Activated naive CD4-positive, alpha-beta T cell treated with anti-CD3 and anti-CD28 coated beads for 36 hours (primary cell): ENCODE measurements at regions of chr1 and their contacts with region 1.

Region 1: DNA sequence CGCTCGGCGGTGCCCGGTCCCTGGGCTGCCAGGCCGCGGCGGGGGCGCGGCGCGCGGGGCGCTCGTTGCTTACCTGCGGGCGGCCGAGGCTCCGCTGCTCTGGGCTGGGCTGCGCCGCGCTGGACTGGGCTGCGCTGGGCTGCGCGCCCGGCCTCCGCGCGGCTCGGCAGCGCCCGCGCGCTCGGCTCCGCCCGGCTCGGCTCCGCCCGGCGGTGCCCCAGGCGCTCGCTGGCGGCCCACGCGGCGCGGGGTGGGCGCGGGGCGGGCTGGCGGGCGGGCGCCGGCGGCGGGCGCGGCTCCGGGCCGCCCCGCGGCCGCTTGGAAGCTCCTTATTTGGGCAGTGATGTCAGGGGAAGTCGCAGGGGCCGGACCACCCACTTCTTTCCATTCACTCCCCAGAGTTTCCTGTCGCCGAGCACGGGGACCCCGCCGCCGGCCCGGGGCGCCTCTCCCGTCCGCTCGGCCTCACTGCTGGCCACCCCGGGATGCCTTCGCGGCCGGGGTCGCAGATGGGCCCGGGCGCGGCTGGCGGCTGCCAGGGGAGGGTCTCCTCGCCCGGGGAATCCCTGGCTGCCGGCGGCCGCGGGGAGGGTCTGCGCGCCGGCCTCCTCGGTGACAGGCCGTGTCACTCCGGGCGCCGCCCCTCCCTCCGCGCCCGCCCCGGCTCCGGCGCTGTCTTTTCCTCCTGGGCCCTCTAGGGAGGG is 177.7 kb upstream of the EDN2 start:
- DNase-seq: peak; percentile 80
- H3K4me3 Mint-ChIP-seq: peak overlapping the region; percentile 67
- H3K27ac Mint-ChIP-seq: peak overlapping the region; percentile 67
- H3K4me1 Mint-ChIP-seq: peaks cover 77% of the 10 kb centered on the region
- H3K27me3 Mint-ChIP-seq: no peaks in the 10 kb centered on the region

Region 2: GRCh38 chr1:41573785-41574713 is 88.2 kb before region 1 on chr1:
- CTCF ChIA-PET with region 1: interaction called, 4 read pairs
- intact Hi-C with region 1: loop called (anchors 1 kb)
- DNase-seq: peak; percentile 92
- H3K4me3 Mint-ChIP-seq: no peak overlapping the region
- H3K27ac Mint-ChIP-seq: peak overlapping the region; percentile 20
- H3K4me1 Mint-ChIP-seq: peaks cover 42% of the 10 kb centered on the region
- H3K27me3 Mint-ChIP-seq: no peaks in the 10 kb centered on the region

Region 3: GRCh38 chr1:41639332-41639936 is 22.8 kb before region 1 on chr1:
- CTCF ChIA-PET with region 1: interaction called, 4 read pairs
- intact Hi-C with region 1: loop called (anchors 1 kb)
- DNase-seq: peak; percentile 88
- H3K4me3 Mint-ChIP-seq: peak overlapping the region; percentile 47
- H3K27ac Mint-ChIP-seq: no peak overlapping the region
- H3K4me1 Mint-ChIP-seq: peaks cover 44% of the 10 kb centered on the region
- H3K27me3 Mint-ChIP-seq: no peaks in the 10 kb centered on the region

Region 4: GRCh38 chr1:41739061-41739955 is 77.1 kb after region 1 on chr1:
- CTCF ChIA-PET with region 1: interaction called, 4 read pairs
- intact Hi-C with region 1: loop called (anchors 1 kb)
- DNase-seq: peak; percentile 96
- H3K4me3 Mint-ChIP-seq: peak overlapping the region; percentile 73
- H3K27ac Mint-ChIP-seq: peak overlapping the region; percentile 98
- H3K4me1 Mint-ChIP-seq: peaks cover 93% of the 10 kb centered on the region
- H3K27me3 Mint-ChIP-seq: no peaks in the 10 kb centered on the region

Region 5: DNA sequence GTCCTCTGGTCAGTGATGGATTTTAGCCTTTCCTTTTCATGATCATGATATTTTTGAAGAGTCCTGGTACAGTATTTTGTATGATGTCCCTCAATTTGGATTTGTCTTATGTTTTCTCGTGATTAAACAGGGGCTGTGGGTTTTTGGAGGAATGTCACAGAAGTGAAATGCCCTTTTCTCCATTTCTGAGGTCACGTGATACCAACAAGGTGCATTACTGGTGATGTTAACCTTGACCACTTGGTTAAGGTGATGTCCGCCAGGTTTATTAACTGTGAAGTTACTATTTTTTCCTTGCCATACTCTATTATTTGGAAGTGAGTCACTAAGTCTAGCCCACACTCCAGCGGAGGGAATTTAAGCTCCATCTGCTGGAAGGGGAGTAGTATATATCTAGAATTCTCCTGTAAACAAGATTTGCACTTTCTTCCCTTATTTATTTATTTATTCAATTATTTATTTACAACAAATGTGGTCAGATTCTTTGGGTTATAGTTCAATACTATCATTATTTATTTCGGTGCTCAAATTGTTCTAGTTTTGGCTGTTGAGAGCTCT is 133.1 kb after region 1 on chr1:
- CTCF ChIA-PET with region 1: no interaction called
- intact Hi-C with region 1: loop called (anchors 5 kb)
- DNase-seq: no peak
- H3K4me3 Mint-ChIP-seq: no peak overlapping the region
- H3K27ac Mint-ChIP-seq: no peak overlapping the region
- H3K4me1 Mint-ChIP-seq: peaks cover 54% of the 10 kb centered on the region
- H3K27me3 Mint-ChIP-seq: no peaks in the 10 kb centered on the region

Region 6: GRCh38 chr1:41862384-41863174 is 200.4 kb after region 1 on chr1:
- CTCF ChIA-PET with region 1: interaction called, 3 read pairs
- intact Hi-C with region 1: loop called (anchors 2 kb)
- DNase-seq: peak; percentile 85
- H3K4me3 Mint-ChIP-seq: peak overlapping the region; percentile 41
- H3K27ac Mint-ChIP-seq: peak overlapping the region; percentile 88
- H3K4me1 Mint-ChIP-seq: peaks cover 44% of the 10 kb centered on the region
- H3K27me3 Mint-ChIP-seq: no peaks in the 10 kb centered on the region